ENCODE measurements at regions of chr6 and their contacts with region 1.

Region 1: DNA sequence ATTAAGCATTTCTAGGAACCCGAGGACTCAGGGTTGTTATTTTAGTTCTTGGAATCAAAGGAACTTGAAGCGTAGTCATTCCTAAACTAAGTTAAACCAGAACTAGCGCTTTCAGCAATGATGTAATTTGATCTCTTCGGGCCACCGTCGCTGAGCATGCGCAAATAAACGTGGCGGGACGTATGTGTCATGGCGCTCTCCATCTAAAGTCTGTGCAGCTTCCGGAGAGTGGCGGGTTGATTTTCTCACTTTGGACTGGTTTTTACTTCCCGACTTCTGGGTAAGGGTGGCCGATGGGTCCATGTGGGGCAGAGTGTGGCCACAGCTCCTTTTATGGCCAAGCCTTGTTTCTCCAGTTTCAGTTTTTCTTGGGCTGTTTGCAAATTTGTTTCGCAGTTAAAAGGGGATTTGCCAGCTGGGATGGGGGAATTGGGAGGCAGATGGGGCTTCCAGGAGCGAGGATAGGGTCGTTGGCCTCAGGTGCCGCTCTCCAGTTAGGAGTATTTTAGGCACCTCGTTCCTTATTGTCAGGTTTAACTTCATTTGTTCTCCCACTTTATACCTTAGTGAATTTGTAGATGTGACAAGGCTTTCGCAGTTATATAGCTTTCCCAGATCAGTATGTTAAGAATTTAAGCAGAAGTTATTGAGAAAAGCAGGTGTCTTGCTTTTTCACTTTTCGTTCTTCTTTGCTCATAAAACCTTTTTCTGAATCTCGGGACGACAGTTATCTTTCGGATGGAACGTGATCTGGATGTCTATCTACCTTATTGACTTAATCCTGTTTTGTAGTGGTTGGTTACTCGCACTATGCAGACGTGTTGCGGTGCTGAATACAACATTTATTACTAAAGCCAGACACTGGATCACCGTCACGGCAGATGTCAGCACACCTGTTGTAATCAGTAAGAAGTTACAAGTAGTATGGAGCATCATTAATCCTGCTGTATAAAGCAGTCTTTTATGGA is at the start of gene CDKAL1:
- DNase-seq: peak; percentile 92 to 97
- H3K4me3 ChIP-seq: peak within 1 kb of the TSS; percentile 72 to 87 (median 84)
- H3K27ac ChIP-seq: peak within 1 kb of the TSS; percentile 81 to 93 (median 92)
- H3K4me1 ChIP-seq: peaks cover 6 to 39% (median 25%) of the 10 kb centered on the region in 4 donors
- H3K27me3 ChIP-seq: no peaks in the 10 kb centered on the region
- CTCF ChIP-seq: no peak
- EP300 ChIP-seq: no peak
- POLR2A ChIP-seq: no peak
- total RNA-seq, gene CDKAL1: 5.2 to 36.7 (median 21.6) TPM

Region 2: DNA sequence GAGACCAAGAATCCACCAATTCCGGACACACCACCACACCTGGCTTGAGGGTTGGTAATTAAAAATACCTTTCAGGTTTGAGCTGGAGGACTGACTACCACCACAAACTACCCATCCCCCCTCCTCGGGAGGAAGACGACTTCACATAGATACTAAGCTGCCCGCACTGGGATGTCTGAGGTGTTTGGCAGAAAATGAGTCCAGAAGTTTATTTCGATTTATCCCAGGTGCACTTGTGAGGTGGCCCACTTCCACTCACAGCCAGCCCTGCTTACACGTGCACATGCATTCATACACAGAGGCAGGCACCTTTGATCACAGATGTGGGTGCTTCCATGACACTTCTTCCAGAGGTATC is 510.3 kb before region 1 on chr6:
- intact Hi-C with region 1: no loop called
- DNase-seq: no peak
- H3K4me3 ChIP-seq: no peak overlapping the region
- H3K27ac ChIP-seq: no peak overlapping the region
- H3K4me1 ChIP-seq: no peaks in the 10 kb centered on the region
- H3K27me3 ChIP-seq: no peaks in the 10 kb centered on the region
- CTCF ChIP-seq: no peak
- EP300 ChIP-seq: no peak
- POLR2A ChIP-seq: no peak

Region 3: DNA sequence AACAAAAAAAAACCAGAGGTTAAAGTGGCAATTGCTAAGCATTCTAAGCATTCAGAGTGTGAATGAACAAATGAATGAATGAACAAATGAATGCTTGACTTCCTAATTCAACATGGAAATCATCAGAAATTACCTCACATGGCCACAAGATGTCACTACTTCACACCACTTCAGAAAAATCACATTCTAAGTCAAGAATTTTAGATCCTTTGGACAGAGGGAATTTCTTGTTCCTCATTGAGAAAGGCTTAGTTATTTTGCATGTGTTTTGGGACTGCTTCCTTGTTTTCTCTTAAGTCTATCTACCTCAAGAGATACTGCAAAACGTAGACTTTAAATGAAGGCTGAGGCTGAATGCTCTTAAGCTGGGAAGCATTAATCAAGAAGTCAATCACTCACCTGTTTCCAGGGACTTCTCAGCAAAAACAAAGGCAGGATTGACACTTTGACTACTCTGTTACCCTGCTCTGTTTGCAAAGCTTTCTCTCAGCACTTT is 442.5 kb before region 1 on chr6:
- intact Hi-C with region 1: loop called (anchors 10 kb)
- DNase-seq: peak in 1 of 2 donors; percentile 78
- H3K4me3 ChIP-seq: no peak overlapping the region
- H3K27ac ChIP-seq: no peak overlapping the region
- H3K4me1 ChIP-seq: peaks cover 0 to 4% (median 0%) of the 10 kb centered on the region in 4 donors
- H3K27me3 ChIP-seq: no peaks in the 10 kb centered on the region
- CTCF ChIP-seq: peak in 5 of 7 experiments; percentile 44 to 77 (median 60)
- EP300 ChIP-seq: no peak
- POLR2A ChIP-seq: no peak

Region 4: DNA sequence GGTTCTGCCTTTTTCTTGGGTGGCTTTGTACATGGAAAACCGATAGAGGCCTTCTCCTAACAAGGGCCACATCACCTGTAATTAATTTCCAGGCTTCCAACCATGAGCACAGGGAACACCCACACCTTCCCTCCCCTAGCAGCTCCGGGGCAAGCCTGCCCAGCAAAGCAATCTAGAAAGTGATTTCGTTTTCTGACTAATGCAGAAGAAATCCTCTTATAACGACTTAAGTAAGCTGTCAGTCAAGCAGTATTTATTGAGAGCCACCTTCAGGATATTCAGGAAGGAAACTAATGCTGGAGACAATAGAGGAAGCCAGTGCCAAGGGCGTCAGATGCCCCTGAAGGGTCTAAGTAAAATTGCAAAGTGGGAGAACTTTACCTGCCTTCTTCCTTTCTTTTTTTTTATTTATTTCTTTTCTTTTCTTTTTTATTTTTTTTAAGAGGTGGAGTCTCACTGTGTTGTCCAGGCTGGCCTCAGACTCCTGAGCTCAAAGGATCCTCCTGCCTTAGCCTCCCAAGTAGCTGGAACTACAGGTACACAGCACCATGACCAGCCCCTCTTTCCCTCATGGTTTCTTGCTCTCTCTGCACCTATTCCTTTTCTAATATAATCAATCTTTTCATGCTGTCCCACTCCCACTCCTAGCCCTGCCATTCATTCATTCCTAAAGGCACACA is 254.8 kb before region 1 on chr6:
- intact Hi-C with region 1: no loop called
- DNase-seq: no peak
- H3K4me3 ChIP-seq: no peak overlapping the region
- H3K27ac ChIP-seq: no peak overlapping the region
- H3K4me1 ChIP-seq: no peaks in the 10 kb centered on the region
- H3K27me3 ChIP-seq: peaks cover 0 to 16% (median 0%) of the 10 kb centered on the region in 3 donors
- CTCF ChIP-seq: no peak
- EP300 ChIP-seq: no peak
- POLR2A ChIP-seq: no peak

Region 5: GRCh38 chr6:20291764-20292580 is 242.6 kb before region 1 on chr6:
- intact Hi-C with region 1: loop called (anchors 5 kb)
- DNase-seq: peak; percentile 82 to 92
- H3K4me3 ChIP-seq: no peak overlapping the region
- H3K27ac ChIP-seq: no peak overlapping the region
- H3K4me1 ChIP-seq: peaks cover 0 to 8% (median 0%) of the 10 kb centered on the region in 4 donors
- H3K27me3 ChIP-seq: no peaks in the 10 kb centered on the region
- CTCF ChIP-seq: peak in 5 of 7 experiments; percentile 77 to 95 (median 89)
- EP300 ChIP-seq: no peak
- POLR2A ChIP-seq: no peak

Region 6: GRCh38 chr6:20399518-20399917 is 135.1 kb before region 1 on chr6:
- intact Hi-C with region 1: loop called (anchors 5 kb)
- DNase-seq: no peak
- H3K4me3 ChIP-seq: no peak overlapping the region
- H3K27ac ChIP-seq: no peak overlapping the region
- H3K4me1 ChIP-seq: peaks cover 0 to 36% (median 15%) of the 10 kb centered on the region in 4 donors
- H3K27me3 ChIP-seq: peaks cover 0 to under 1% (median 0%) of the 10 kb centered on the region in 3 donors
- CTCF ChIP-seq: no peak
- EP300 ChIP-seq: no peak
- POLR2A ChIP-seq: no peak

Region 7: GRCh38 chr6:20438462-20439070 is 96.0 kb before region 1 on chr6:
- intact Hi-C with region 1: no loop called
- DNase-seq: no peak
- H3K4me3 ChIP-seq: no peak overlapping the region
- H3K27ac ChIP-seq: no peak overlapping the region
- H3K4me1 ChIP-seq: no peaks in the 10 kb centered on the region
- H3K27me3 ChIP-seq: no peaks in the 10 kb centered on the region
- CTCF ChIP-seq: no peak
- EP300 ChIP-seq: no peak
- POLR2A ChIP-seq: no peak